HepG2 (cell line): ENCODE measurements at regions of chr2 and their contacts with region 1.

Region 1: DNA sequence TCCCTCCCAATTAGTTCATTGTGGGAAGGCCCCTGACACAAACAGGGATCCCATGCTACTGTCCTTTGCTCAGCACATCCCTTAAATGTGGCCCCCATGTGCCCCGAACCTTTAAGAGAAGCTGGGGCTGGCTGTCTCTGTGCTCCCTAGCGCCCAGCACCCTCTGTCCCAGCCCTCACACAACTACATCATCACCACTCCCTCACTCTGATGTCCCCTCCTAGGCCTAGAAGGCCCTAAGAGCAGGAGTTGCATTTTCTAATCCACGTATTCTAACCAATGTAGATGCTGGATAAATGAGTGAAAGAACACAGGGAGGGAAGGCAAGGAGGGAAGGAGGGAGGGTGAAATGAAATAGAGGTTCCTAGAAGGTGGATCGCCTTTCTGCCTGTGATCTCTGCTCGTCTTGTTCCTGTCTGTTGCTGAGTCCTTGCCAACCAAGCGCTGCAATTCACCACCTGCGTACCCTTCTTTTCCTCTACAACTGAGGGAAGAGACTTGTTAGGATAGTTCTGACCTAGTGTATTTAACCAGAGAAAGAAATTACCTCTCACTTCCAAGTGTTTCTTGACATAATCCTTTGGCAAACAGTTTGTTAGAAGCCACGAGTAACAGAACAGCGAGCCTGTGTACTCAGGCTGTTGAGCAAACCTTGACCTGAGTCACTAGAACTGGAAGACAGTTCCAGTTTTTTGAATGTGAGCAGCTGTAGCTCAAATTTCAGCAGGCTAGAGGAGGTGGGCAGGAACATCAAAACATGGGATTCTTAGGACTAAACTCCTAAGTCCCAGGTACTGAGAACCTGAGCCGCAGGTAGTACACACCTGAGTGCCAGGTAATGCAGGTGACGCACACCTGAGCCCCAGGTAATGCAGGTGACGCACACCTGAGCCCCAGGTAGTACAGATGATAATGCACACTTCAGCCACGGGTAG is 181.5 kb upstream of the ID2 start:
- DNase-seq: peak; percentile 75
- ATAC-seq: peak; percentile 86
- H3K4me3 ChIP-seq: no peak overlapping the region
- H3K27ac ChIP-seq: no peak overlapping the region
- H3K4me1 ChIP-seq: peaks cover 20% of the 10 kb centered on the region
- H3K27me3 ChIP-seq: peaks cover 7 to 58% of the 10 kb centered on the region in 2 experiments; a peak in 3 of 5 replicates
- CTCF ChIP-seq: no peak
- EP300 ChIP-seq: peak in 1 of 2 experiments; percentile 75; a peak in 2 of 4 replicates
- POLR2A ChIP-seq: no peak
- RAD21 ChIP-seq: no peak

Region 2: DNA sequence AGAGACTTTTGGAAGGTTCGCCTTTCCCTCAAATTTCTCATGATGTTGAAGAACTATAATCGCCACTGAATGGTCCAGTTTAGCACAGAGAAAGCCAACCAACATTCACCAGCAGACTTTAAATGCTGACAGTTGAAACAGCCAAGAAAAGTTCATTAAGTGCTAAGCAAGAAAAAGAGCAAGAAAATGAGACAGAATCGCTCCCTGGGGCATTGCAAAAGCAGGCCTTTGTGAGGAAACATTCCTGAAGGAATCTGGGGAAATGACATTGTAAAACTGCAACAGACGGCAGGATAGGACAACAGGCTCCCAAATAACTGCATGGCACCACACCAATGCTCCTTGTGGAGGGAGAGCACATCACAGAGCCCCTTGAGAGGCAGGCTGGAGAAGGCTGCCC is 87.8 kb before region 1 on chr2:
- CTCF ChIA-PET with region 1: no interaction called
- POLR2A ChIA-PET with region 1: no interaction called
- in situ Hi-C with region 1: no loop called
- intact Hi-C with region 1: loop called (anchors 5 kb)
- DNase-seq: no peak
- ATAC-seq: no peak; the same call in 2 of the 3 replicates
- H3K4me3 ChIP-seq: no peak overlapping the region
- H3K27ac ChIP-seq: peak overlapping the region; percentile 80
- H3K4me1 ChIP-seq: peaks cover 72% of the 10 kb centered on the region
- H3K27me3 ChIP-seq: no peaks in the 10 kb centered on the region; a peak in 1 of 5 replicates
- CTCF ChIP-seq: no peak
- EP300 ChIP-seq: no peak
- POLR2A ChIP-seq: no peak
- RAD21 ChIP-seq: no peak